ENCODE measurements at regions of chr12 and their contacts with region 1.

Region 1: GRCh38 chr12:68189821-68190242 is 30.3 kb upstream of the IFNG start:
- DNase-seq: peak; percentile 65
- H3K4me3 Mint-ChIP-seq: peak overlapping the region; percentile 9
- H3K27ac Mint-ChIP-seq: peak overlapping the region; percentile 61
- H3K4me1 Mint-ChIP-seq: peaks cover 26% of the 10 kb centered on the region
- H3K27me3 Mint-ChIP-seq: no peaks in the 10 kb centered on the region

Region 2: DNA sequence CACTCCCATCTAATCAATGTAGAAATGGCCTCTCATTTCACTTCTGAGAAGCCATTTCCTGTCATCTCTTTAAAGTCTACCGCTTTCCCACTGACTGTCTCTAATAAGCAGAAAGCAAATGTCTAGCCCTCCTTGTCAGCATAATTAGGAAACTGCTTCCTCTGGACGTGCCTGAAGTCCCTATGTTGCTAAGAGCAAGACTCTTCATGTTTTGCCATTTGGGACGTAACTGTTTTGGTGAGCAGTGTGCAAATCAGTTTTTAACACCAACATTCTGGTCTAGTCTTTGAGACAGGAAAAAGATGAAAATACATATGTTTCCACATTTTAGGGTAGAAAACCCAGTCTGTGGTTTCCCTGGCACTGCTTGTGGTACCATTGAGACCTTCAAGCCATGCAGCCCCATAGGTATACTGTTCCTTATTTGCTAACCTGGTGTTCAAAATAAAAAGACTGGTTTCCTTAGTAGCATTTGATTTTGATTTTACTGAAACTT is 52.4 kb before region 1 on chr12:
- CTCF ChIA-PET with region 1: no interaction called
- intact Hi-C with region 1: loop called (anchors 1 kb)
- DNase-seq: peak; percentile 38
- H3K4me3 Mint-ChIP-seq: no peak overlapping the region
- H3K27ac Mint-ChIP-seq: peak overlapping the region; percentile 91
- H3K4me1 Mint-ChIP-seq: peaks cover 52% of the 10 kb centered on the region
- H3K27me3 Mint-ChIP-seq: no peaks in the 10 kb centered on the region

Region 3: DNA sequence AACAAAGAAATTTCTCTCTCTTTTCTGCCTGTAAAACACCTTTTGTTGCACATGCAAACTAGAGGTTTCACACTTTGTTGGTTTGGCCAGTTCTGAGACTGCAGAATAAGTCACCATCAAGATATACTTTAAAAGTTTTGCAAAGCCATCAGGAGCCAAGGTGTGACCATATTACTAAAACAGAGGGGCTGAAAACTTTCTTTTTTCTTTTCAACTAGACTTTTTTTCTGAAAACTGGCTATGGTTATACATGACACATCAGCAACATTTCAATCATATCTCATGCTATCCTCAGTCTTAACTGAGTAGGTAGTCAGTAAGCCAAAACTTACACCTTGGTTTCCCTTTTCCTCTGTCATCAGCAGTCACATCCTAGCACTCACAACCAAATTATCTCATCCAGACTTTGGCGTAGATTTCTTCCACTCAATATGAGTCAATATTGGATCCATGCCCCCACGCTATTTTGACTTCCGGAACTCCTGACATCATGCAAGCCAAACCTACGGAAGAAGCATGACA is 26.2 kb before region 1 on chr12:
- CTCF ChIA-PET with region 1: interaction called, 11 read pairs
- intact Hi-C with region 1: loop called (anchors 1 kb)
- DNase-seq: peak; percentile 27
- H3K4me3 Mint-ChIP-seq: no peak overlapping the region
- H3K27ac Mint-ChIP-seq: peak overlapping the region; percentile 64
- H3K4me1 Mint-ChIP-seq: peaks cover 19% of the 10 kb centered on the region
- H3K27me3 Mint-ChIP-seq: no peaks in the 10 kb centered on the region

Region 4: DNA sequence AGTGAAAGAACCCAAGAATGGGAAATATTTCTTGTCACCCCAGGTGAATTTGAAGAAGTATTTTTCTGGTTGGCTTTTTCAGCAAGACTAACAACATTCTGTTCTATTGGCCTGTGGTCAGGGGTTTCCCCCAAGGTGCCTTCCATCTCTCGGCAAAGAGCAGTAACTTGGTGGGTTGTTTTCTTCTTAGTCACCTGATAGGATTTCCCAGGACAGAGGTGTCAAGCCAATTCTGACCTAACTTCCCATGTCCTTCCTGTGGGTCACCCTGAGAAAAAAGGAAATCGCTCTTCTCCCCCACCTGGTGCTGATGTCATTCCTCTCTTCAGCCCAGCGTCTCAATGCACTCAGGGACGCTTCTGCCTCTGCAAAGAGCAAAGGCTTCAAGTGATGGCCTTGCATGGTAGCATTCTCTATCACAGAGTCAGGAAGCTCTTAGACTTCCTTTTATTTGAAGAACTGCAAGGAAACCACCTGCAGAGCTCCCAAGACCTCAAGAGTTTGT is 14.2 kb before region 1 on chr12:
- CTCF ChIA-PET with region 1: interaction called, 5 read pairs
- intact Hi-C with region 1: loop called (anchors 1 kb)
- DNase-seq: peak; percentile 87
- H3K4me3 Mint-ChIP-seq: peak overlapping the region; percentile 62
- H3K27ac Mint-ChIP-seq: peak overlapping the region; percentile 89
- H3K4me1 Mint-ChIP-seq: peaks cover 78% of the 10 kb centered on the region
- H3K27me3 Mint-ChIP-seq: no peaks in the 10 kb centered on the region

Region 5: DNA sequence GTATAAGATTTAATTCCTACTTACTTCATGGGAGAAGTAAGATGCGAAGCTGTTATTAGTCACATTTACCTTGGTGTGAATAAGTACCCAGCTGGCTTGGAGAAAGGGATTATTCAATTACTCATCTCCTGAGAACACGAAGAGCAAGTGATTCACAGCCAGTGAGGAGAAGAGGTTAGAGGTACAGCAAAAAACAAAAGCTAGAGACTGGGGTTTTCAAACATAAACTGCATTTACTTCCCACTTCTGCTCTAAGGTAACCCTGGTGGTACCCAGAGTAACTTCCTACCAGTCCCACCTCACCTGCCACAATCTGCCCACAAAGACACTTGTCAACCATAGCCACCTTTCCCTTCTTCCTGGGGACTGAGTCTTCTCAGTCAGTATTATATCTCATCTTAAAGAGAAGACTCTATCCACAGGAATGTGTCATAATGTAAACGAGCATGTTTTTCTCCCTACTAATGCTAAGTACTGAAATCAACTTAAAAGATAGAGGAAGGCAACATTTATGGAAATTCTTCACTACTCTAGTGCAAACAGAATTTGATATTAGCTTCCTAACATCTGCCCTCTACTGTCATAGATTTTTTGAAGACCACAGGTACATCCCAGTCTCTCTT is 69.6 kb after region 1 on chr12:
- CTCF ChIA-PET with region 1: no interaction called
- intact Hi-C with region 1: no loop called
- DNase-seq: peak; percentile 50
- H3K4me3 Mint-ChIP-seq: no peak overlapping the region
- H3K27ac Mint-ChIP-seq: peak overlapping the region; percentile 72
- H3K4me1 Mint-ChIP-seq: peaks cover 24% of the 10 kb centered on the region
- H3K27me3 Mint-ChIP-seq: peaks cover 16% of the 10 kb centered on the region

Measured in activated naive CD4-positive, alpha-beta T cell treated with anti-CD3 and anti-CD28 coated beads for 36 hours (primary cell).